ENCODE measurements at regions of chr2 and their contacts with region 1.

Region 1: DNA sequence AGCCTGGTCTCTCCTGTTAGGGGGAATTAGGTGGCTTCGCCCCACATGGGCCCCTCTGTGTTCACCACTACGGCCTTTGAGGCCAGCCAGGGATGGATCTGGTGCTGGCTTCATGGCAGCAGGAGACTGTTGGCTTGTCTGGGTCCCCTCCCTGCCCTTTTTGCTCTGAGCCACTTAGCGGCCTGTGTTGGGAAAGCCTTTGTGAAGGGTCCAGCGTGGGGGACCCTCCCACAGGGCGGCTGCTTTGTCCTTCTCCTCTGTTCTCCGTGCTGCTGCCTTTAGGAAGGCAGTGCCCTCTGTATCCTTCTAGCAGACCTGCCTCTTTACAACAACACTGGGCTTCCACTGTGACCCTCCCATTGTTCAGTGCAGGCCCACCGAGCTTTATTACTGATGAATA is 118.4 kb downstream of the TSN start:
- DNase-seq: no peak

Region 2: GRCh38 chr2:120283649-120284048 is 1590.2 kb before region 1 on chr2:
- intact Hi-C with region 1: loop called in 1 of 2 experiments (anchors 5 kb)
- DNase-seq: no peak

Region 3: DNA sequence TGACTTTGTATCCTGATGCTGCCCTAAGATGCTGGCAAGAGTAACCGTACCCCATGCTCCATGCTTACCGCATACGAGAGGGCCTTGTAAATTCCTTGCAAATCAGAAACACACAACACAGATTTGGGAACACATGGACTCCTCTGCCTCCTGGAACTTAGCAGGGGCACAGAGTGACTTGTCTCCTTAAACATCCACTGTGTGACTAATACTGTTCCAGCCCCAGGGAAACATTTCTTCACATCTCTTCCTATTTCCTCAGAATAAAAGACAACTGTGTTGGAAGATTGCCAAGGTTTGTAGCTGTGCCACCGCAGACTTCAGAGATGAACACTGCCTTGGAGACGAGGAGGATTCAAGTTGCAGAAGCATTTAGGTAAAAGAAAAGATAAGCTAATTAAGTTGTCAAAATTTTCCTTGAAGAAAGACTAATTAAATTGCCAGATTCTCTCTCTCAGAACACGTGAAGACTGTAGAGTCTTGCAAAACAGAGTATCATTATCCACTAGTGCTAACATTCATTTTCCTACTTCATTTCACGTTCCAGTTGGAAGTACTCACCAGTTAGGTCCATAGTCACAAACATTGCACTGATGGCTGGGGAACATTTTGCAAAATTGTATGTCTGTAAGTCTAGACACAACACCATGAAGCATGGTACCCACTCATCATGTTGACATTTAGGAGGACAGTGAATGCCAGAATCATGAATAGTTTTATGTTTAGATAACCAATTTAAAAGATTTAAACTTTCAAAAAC is 70.4 kb after region 1 on chr2:
- intact Hi-C with region 1: no loop called
- DNase-seq: no peak